Activated naive CD4-positive, alpha-beta T cell treated with anti-CD3 and anti-CD28 coated beads, Interleukin-2, amount 10 ng/mL, durations not matched to agents 7 days and 5 days (primary cell): ENCODE measurements at regions of chr1 and their contacts with region 1.

Region 1: GRCh38 chr1:186304982-186305949 is 69.8 kb downstream of the TPR start:
- DNase-seq: peak; percentile 44
- H3K4me3 Mint-ChIP-seq: no peak overlapping the region
- H3K27ac Mint-ChIP-seq: peak overlapping the region; percentile 95
- H3K4me1 Mint-ChIP-seq: peaks cover 60% of the 10 kb centered on the region
- H3K27me3 Mint-ChIP-seq: no peaks in the 10 kb centered on the region

Region 2: DNA sequence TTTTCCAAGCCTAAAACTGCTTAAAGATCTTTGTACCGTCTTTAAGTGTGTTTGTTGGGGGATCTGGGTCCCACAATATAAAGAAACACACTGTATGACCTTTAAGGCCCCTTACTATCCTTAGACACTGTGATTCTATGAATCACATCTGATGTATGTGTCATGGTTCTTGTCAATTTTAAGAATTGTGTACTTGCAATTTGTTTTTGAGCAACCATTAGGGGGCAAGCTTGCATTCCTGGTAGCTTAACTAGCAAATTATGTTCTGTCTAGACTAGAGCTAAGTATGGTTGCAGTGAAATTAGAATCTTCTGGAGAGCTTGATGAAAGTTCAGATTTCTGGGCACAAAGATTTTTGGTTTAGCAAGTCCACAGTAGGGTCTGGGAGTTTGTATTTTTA is 149.7 kb before region 1 on chr1:
- CTCF ChIA-PET with region 1: no interaction called
- DNase-seq: no peak
- H3K4me3 Mint-ChIP-seq: no peak overlapping the region
- H3K27ac Mint-ChIP-seq: no peak overlapping the region
- H3K4me1 Mint-ChIP-seq: no peaks in the 10 kb centered on the region
- H3K27me3 Mint-ChIP-seq: peaks cover 4% of the 10 kb centered on the region

Region 3: GRCh38 chr1:186286615-186287317 is 18.5 kb before region 1 on chr1:
- CTCF ChIA-PET with region 1: interaction called, 58 read pairs
- DNase-seq: no peak
- H3K4me3 Mint-ChIP-seq: no peak overlapping the region
- H3K27ac Mint-ChIP-seq: no peak overlapping the region
- H3K4me1 Mint-ChIP-seq: peaks cover 79% of the 10 kb centered on the region
- H3K27me3 Mint-ChIP-seq: no peaks in the 10 kb centered on the region

Region 4: DNA sequence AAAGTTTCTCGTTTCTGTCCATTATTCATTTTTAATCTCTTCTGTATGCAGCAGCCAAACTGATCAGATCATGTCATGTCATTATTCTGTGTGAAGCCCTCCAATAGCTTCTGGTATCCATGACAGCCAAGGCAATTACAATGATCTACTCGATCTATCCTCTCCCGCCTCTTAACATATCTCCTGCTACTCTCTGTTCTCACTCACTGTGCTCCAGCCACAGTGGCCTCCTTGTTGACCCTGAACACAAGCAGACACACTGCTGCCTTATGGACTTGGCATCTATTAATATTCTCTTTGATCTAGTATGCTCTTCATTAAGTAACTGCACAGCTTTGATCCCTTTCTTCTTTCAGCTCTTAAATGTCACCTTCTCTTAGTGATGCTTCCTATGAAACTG is 10.3 kb after region 1 on chr1:
- CTCF ChIA-PET with region 1: interaction called, 14 read pairs
- DNase-seq: no peak
- H3K4me3 Mint-ChIP-seq: no peak overlapping the region
- H3K27ac Mint-ChIP-seq: peak overlapping the region; percentile 66
- H3K4me1 Mint-ChIP-seq: peaks cover 36% of the 10 kb centered on the region
- H3K27me3 Mint-ChIP-seq: no peaks in the 10 kb centered on the region

Region 5: DNA sequence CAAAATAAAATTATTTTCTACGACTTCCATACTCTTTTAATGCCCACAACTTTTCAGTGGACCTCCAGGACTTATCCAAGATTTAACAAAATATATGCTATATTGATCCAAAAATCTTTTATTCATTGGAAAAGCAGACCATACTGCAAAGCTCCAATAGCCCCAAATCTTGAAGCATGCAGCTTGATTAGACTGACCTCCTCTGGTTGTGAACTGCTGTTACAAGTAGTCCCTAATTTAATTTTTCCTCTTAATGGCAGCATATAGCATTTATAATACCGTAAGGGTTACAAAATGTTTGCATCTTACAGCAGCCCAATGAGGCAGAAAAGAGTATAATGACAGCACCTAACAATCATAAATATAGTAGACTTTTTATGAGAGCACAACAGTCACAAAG is 20.0 kb after region 1 on chr1:
- CTCF ChIA-PET with region 1: interaction called, 33 read pairs
- DNase-seq: no peak
- H3K4me3 Mint-ChIP-seq: no peak overlapping the region
- H3K27ac Mint-ChIP-seq: peak overlapping the region; percentile 38
- H3K4me1 Mint-ChIP-seq: peaks cover 38% of the 10 kb centered on the region
- H3K27me3 Mint-ChIP-seq: no peaks in the 10 kb centered on the region

Region 6: DNA sequence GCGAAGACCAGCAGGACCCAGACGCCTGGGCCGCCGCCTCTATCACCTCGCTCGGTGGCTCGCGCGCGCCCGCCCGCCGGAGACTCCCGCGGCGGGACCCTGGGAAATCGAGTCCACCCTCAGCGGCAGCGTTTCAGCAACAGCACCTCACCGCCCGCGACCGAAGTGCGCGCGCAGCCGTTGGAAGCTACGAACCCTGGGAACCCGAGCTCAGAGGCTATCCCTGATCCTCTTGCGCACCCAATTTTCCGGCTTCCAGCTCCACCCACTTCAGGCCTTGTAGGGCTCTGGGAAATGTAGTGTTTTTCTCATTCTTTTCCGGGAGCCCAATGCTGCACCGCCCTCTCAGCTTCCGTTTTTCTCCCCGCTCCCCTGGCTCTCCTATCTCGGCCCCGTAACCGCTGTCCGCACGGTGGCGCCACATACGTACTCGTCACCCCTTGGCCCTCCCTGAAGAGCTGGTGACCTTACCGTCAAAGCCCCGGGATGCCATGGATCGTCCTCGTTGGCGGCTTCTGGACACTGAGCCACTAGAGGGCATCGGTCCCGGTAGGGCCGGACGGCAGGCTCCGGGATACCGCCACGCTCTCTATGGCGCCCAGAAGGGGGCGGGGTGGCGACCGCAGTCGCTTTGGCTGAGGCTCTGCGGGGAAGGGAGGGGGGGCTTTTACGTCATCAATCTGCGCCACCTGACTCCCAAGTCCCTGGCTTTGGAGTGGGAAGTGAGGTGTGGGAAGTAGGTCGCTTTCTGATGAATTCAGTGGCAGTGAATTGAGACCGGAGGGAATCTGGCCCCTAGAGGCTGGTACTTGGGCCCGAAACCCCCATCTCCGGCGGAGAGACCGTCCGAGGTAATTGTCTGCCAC is 70.1 kb after region 1 on chr1 and contains the starts of genes ODR4 and TPR:
- CTCF ChIA-PET with region 1: interaction called, 12 read pairs
- DNase-seq: peak; percentile 98
- H3K4me3 Mint-ChIP-seq: peak within 1 kb of the TSS; percentile 99
- H3K27ac Mint-ChIP-seq: peak within 1 kb of the TSS; percentile 96
- H3K4me1 Mint-ChIP-seq: peaks cover 52% of the 10 kb centered on the region
- H3K27me3 Mint-ChIP-seq: peaks cover 5% of the 10 kb centered on the region

Region 7: DNA sequence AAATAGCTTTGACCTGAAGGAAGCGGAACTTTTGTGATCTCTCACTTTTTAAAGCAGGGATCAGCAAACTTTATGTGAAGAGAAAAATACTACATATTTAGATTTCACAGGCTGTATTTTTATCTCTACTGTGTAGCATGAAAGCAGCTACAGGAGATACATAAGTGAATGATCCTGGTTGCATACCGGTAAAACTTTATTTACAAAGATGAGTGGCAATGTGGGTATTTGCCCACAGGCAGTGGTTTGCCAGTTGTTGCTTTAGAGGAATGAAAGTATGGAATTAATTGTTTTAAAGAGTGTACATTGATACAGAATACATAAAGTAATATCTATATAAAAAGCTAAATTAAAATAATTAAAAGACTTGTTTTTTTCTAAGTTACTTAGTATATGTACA is 88.2 kb after region 1 on chr1:
- CTCF ChIA-PET with region 1: no interaction called
- DNase-seq: no peak
- H3K4me3 Mint-ChIP-seq: no peak overlapping the region
- H3K27ac Mint-ChIP-seq: no peak overlapping the region
- H3K4me1 Mint-ChIP-seq: no peaks in the 10 kb centered on the region
- H3K27me3 Mint-ChIP-seq: no peaks in the 10 kb centered on the region

Region 8: DNA sequence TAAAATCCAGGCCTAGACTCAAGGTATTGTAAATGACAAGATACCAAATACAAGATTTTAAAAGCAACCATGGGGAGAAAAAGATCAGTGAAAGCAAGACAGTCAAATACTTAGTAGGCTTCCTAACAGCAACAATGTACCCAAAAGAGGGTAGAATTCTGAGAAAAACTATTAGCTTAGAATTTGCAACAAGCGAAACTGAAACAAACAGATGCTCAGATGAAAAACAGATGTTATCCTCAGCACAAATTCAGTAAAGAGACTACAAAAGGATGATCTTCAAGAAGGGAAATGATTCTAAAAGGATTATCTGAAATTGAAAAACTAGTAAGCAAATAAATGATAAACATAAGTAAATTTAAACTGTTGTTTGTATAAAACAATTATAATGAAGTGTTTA is 115.7 kb after region 1 on chr1:
- CTCF ChIA-PET with region 1: no interaction called
- DNase-seq: no peak
- H3K4me3 Mint-ChIP-seq: peak overlapping the region; percentile 46
- H3K27ac Mint-ChIP-seq: peak overlapping the region; percentile 90
- H3K4me1 Mint-ChIP-seq: peaks cover 38% of the 10 kb centered on the region
- H3K27me3 Mint-ChIP-seq: no peaks in the 10 kb centered on the region